Right ventricle myocardium superior (tissue), 1 donor: ENCODE measurements at regions of chr3 and their contacts with region 1.

Region 1: DNA sequence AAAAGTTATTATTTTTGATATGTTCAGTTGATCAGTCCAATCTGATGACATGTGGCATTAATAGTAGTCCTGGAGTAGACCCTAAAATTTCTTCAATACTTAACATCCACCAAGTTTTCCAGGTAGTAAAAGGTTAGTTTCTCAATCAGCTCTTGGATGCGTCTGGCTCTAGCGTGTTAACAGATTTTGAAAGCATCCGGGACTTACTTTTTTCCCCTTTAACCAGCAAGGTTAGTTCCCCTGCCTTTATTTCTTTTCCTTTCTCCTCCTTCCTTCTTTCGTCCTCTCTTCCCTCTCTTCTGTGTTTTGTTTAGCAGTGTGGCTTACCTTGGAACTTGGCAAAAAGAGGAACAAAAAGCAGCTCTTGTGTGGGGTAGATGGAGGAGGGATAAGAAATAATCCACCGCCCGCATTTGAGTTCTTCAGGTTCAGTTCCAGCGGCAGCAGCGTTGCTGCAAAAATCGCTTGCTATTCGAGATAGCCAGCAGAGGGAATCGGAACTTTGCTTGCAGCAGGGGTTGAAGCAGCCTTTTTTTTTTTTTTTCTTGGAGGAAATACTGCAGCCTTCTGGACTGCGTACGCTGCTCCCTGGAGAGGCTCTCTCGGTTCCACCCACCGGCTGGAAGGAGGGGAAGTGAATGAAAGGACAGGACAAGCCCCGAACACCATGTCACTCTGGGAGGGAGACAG is at the start of gene RBMS3:
- DNase-seq: peak; percentile 91
- ATAC-seq: peak; percentile 88
- total RNA-seq, gene RBMS3: 25.3 TPM

Region 2: DNA sequence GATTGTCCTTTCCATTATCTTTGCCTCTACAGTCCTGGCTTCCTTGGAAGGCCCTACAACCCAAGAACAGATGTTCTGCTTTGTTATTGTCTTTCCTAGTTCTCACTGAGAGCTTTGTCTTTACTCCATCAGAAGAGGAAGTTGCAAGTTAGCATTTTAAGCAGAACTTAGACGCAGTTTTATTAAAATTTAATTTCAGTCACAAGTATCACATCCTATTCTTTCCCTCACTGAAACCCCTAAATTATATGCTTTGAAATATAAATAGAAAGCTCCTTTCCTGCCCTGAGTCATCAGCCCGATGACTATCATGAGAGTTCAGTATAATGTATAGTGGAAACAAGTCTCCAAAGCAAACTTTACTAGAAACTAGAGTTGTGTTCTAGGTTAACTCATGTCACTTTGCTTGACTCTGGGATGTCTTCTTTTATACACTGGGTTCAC is 290.9 kb before region 1 on chr3:
- intact Hi-C with region 1: no loop called
- DNase-seq: no peak
- ATAC-seq: no peak

Region 3: DNA sequence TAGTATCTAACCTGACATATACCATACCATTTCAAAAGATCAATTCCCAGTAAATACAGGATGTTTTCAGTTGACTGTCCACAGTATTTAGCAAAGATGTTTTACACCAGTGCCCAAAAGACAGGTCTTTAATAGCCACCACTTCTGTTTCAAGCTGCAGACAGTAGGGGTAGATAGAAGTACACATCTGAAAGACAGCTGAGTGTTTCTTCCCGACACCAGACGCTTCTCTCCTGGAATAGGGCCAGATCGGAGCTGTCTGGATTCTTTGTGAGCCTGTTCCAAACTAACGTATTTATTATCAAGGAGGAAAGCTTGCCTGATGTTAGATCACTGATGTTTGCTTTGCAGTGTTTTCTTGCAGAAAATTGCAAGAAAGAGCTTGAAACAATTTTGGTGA is 135.7 kb before region 1 on chr3:
- intact Hi-C with region 1: loop called (anchors 10 kb)
- DNase-seq: peak; percentile 46
- ATAC-seq: peak; percentile 81

Region 4: GRCh38 chr3:29430558-29430971 is 150.0 kb after region 1 on chr3:
- intact Hi-C with region 1: loop called (anchors 10 kb)
- DNase-seq: no peak
- ATAC-seq: no peak

Region 5: DNA sequence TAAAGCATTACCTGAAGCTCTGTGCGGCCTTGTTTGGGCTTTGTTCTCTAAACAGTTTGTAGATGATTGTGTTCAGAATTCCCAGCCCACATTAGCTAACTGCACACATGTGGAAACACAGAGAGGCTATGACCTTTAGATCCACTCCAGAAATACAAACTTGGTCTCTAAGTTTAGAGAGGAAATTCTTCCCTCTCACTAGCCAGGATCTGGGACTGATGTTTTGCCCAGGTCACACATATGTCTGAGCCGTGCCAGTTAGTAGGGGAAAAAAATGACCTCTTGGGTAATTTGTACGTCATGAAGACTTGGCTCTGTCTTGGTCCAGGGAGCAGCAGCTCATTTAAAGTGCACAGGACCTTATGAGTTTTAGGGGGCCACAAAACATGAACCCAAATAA is 223.4 kb after region 1 on chr3:
- intact Hi-C with region 1: loop called (anchors 10 kb)
- DNase-seq: no peak
- ATAC-seq: peak; percentile 93

Region 6: DNA sequence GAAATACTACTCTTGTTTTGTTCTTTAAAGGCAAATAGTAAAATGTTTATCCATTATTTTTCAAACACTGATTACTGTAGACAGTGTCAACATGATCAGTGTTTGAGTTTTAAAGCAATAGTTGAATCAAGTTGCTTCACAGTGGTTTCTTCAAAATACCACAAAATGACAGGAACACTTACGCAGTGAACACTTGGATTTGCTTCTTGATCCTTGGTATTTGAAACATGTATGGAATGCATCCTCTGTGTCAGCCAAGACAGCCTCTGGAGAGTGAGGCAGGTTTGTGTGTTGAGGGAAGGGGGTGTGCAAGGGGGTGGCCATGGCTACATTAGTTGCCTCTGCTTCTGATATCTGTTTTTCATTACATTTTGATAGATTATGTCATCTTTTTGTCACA is 413.3 kb after region 1 on chr3:
- intact Hi-C with region 1: loop called (anchors 5 kb)
- DNase-seq: no peak
- ATAC-seq: peak; percentile 6

Region 7: DNA sequence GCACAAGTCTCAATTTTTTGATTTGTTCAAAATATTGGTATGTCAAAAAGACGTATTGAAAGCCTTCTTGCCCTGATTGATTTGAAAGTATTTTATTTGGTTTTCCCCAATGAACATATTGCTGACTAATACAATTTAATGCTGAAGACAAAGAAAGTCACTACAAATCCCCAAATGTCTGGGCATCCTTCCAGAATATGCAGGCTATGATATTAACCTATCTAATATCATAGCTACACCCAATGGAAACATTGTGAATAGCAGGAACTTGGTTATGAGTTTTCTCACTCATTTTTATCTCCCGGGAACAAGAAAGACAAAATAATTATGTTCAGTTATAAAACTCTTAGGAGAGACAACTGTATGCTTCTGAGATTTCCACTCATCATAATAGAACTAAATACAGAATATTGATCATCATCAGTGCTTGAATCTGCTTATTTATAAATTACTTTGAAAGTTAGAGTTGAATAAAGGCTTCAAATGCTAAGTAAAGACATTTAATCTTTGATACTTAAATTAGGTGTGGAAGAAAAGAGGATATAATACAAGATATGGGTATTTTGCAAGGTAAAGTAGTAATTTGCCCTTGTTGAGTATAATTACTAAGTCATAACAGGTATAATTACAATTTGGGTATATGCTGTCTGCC is 484.2 kb after region 1 on chr3:
- intact Hi-C with region 1: loop called (anchors 5 kb)
- DNase-seq: no peak
- ATAC-seq: peak; percentile 84